HepG2 (cell line): ENCODE measurements at regions of chr6 and their contacts with region 1.

Region 1: GRCh38 chr6:44133003-44133931 is 5.9 kb downstream of the TMEM63B start:
- DNase-seq: peak; percentile 68
- ATAC-seq: peak; percentile 92
- H3K4me3 ChIP-seq: no peak overlapping the region
- H3K27ac ChIP-seq: peak overlapping the region; percentile 4
- H3K4me1 ChIP-seq: peaks cover 57% of the 10 kb centered on the region
- H3K27me3 ChIP-seq: no peaks in the 10 kb centered on the region
- CTCF ChIP-seq: no peak
- EP300 ChIP-seq: no peak
- POLR2A ChIP-seq: no peak
- RAD21 ChIP-seq: no peak

Region 2: GRCh38 chr6:44113414-44113813 is 19.9 kb before region 1 on chr6:
- CTCF ChIA-PET with region 1: no interaction called
- POLR2A ChIA-PET with region 1: interaction called, 16 read pairs
- in situ Hi-C with region 1: no loop called
- intact Hi-C with region 1: no loop called
- DNase-seq: no peak
- ATAC-seq: peak; percentile 53
- H3K4me3 ChIP-seq: no peak overlapping the region
- H3K27ac ChIP-seq: peak overlapping the region; percentile 19
- H3K4me1 ChIP-seq: peaks cover 86% of the 10 kb centered on the region
- H3K27me3 ChIP-seq: no peaks in the 10 kb centered on the region
- CTCF ChIP-seq: peak; percentile 32; the same call in 1 of the 2 replicates
- EP300 ChIP-seq: no peak
- POLR2A ChIP-seq: no peak
- RAD21 ChIP-seq: peak; percentile 32; the same call in 1 of the 2 replicates

Region 3: GRCh38 chr6:44156494-44157151 is 23.4 kb after region 1 on chr6:
- CTCF ChIA-PET with region 1: no interaction called
- POLR2A ChIA-PET with region 1: interaction called, 15 read pairs
- in situ Hi-C with region 1: no loop called
- intact Hi-C with region 1: loop called (anchors 2 kb)
- DNase-seq: peak; percentile 97
- ATAC-seq: peak; percentile 92
- H3K4me3 ChIP-seq: peak overlapping the region; percentile 9 to 53 (median 29)
- H3K27ac ChIP-seq: peak overlapping the region; percentile 85
- H3K4me1 ChIP-seq: peaks cover 71% of the 10 kb centered on the region
- H3K27me3 ChIP-seq: no peaks in the 10 kb centered on the region
- CTCF ChIP-seq: no peak; the same call in 1 of the 2 replicates
- EP300 ChIP-seq: peak; percentile 92 to 96
- POLR2A ChIP-seq: no peak; a peak in 2 of 4 replicates
- RAD21 ChIP-seq: peak; percentile 42; the same call in 1 of the 2 replicates

Region 4: DNA sequence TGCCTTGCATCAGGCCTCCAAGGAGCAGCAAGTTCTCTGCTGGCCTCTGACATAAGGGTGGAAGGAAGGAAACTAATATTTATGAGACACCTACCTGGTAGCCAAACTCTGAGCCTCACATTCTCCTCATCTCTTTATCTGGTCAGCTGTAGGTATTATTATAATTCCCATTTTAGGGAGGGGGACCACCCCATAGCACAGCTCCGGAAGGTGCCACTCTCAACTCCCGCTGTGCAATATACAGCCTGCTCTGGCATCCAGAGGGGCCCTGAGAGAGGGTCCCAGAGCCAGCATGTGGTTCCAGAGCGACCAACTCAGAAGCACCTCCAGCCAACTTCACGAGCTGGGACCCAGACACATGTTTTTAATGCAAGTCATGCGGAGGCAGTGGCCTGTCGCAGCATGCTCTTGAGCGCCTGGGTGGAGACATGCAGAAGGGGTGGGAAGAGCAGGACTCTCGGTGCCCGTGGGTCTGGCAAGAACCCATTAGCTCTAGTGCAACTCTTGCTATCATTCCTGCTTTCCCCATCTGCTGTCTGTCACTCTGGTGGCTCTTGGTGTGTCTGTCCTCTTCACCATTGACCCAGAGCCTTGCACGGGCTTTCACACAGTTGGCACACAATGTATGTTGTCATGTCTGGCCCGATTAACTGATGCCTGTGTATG is 68.5 kb after region 1 on chr6:
- CTCF ChIA-PET with region 1: no interaction called
- POLR2A ChIA-PET with region 1: no interaction called
- in situ Hi-C with region 1: no loop called
- intact Hi-C with region 1: no loop called
- DNase-seq: no peak
- ATAC-seq: peak; percentile 11
- H3K4me3 ChIP-seq: no peak overlapping the region
- H3K27ac ChIP-seq: no peak overlapping the region
- H3K4me1 ChIP-seq: peaks cover 63% of the 10 kb centered on the region
- H3K27me3 ChIP-seq: no peaks in the 10 kb centered on the region; a peak in 2 of 5 replicates
- CTCF ChIP-seq: no peak
- EP300 ChIP-seq: no peak
- POLR2A ChIP-seq: no peak
- RAD21 ChIP-seq: no peak